HCT116 (cell line): ENCODE measurements at regions of chr5 and their contacts with region 1.

Region 1: GRCh38 chr5:112848116-112848811 is 12.8 kb upstream of the SRP19 start:
- DNase-seq: peak; percentile 68
- ATAC-seq: peak; percentile 99
- H3K4me3 ChIP-seq: 0 out of 4 replicates have a peak overlapping the region, but pooled peaks of 1 of the 2 experiments have one; percentile 13
- H3K27ac ChIP-seq: no peak overlapping the region
- H3K4me1 ChIP-seq: peaks cover 0 to 4% of the 10 kb centered on the region in 2 experiments; a peak in 1 of 4 replicates
- H3K27me3 ChIP-seq: no peaks in the 10 kb centered on the region
- CTCF ChIP-seq: peak; percentile 54 to 76 (median 73); a peak in 5 of 6 replicates
- POLR2A ChIP-seq: no peak
- RAD21 ChIP-seq: peak; percentile 61

Region 2: DNA sequence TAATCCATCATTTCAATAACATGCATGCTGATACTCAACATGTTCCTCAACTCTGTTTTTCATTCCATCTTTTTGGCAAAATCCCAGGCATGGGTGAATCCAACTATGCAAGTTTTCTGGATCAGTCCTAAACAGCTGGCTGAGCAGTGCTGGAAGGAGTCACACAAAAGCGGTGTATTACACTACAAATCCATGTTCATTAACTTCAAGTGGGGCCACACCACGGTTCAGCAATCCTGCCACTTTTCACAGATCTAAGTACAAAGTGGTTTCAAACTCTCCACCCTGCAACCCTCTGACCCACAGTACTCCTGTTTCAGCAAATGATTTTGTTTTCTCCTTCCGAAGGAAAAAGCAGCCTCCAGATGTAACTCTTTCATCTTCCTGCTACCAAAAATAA is 651.7 kb before region 1 on chr5:
- CTCF ChIA-PET with region 1: no interaction called
- POLR2A ChIA-PET with region 1: no interaction called
- RAD21 ChIA-PET with region 1: no interaction called
- intact Hi-C with region 1: loop called (anchors 10 kb)
- DNase-seq: no peak
- ATAC-seq: no peak
- H3K4me3 ChIP-seq: no peak overlapping the region
- H3K27ac ChIP-seq: no peak overlapping the region
- H3K4me1 ChIP-seq: no peaks in the 10 kb centered on the region
- H3K27me3 ChIP-seq: peaks cover 13% of the 10 kb centered on the region; the same call in 1 of the 2 replicates
- CTCF ChIP-seq: no peak
- POLR2A ChIP-seq: no peak
- RAD21 ChIP-seq: no peak

Region 3: DNA sequence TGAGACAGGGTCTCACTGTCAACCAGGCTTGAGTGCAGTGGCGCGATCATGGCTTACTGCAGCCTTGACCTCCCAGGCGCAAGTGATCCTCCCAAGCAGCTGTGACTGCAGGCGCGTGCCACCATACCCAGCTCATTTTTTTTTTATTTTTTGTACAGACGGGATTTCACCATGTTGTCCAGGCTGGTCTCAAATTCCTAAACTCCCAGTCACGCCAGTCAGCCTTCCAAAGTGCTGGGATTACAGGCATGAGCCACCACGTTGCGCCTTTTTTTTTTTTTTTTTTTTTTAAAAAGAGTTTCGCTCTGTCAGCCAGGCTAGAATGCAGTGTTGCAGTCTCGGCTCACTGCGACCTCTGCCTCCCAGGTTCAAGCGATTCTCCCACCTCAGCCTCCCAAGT is 14.3 kb before region 1 on chr5:
- CTCF ChIA-PET with region 1: interaction called, 11 read pairs
- POLR2A ChIA-PET with region 1: interaction called, 4 read pairs
- RAD21 ChIA-PET with region 1: no interaction called
- intact Hi-C with region 1: no loop called
- DNase-seq: no peak
- ATAC-seq: no peak
- H3K4me3 ChIP-seq: no peak overlapping the region
- H3K27ac ChIP-seq: no peak overlapping the region
- H3K4me1 ChIP-seq: no peaks in the 10 kb centered on the region
- H3K27me3 ChIP-seq: no peaks in the 10 kb centered on the region
- CTCF ChIP-seq: no peak
- POLR2A ChIP-seq: no peak
- RAD21 ChIP-seq: no peak

Region 4: DNA sequence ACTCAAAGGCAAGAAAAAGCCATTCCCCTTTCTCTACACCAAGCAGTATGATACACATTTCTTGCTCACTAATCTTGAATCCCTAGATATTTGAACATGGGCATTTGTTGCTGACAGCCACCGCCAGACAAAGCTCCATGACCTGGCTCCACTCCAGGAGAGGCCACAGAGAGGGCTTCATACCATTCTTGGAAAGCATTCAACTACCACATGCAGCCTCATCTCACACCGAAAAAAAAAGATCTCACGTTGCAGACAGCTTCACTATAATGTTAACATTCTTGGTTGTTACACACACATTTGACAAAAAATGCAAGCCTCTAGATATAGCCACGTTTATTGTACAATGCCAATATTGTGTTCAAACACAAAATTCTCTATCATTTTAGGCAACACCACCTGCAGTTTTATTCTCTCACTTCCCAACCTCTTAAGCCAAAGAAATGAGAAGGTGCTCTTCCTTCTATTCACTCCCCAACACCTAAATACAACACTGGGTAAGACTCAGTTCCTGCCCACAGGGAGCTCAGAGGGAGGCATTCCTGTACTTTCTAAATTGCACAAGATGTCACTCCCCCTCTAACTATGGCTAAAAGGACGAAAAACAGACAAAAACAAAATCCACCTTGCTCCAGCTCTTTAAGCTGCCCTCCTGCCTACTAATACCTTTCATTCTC is 364.1 kb after region 1 on chr5:
- CTCF ChIA-PET with region 1: no interaction called
- POLR2A ChIA-PET with region 1: no interaction called
- RAD21 ChIA-PET with region 1: no interaction called
- intact Hi-C with region 1: no loop called
- DNase-seq: no peak
- ATAC-seq: peak; percentile 31; the same call in 1 of the 2 replicates
- H3K4me3 ChIP-seq: no peak overlapping the region
- H3K27ac ChIP-seq: no peak overlapping the region
- H3K4me1 ChIP-seq: peaks cover 8 to 31% of the 10 kb centered on the region in 2 experiments; a peak in 3 of 4 replicates
- H3K27me3 ChIP-seq: no peaks in the 10 kb centered on the region
- CTCF ChIP-seq: no peak
- POLR2A ChIP-seq: no peak
- RAD21 ChIP-seq: no peak